Right lobe of liver (tissue), 6 donors: ENCODE measurements at regions of chr3 and their contacts with region 1.

Region 1: DNA sequence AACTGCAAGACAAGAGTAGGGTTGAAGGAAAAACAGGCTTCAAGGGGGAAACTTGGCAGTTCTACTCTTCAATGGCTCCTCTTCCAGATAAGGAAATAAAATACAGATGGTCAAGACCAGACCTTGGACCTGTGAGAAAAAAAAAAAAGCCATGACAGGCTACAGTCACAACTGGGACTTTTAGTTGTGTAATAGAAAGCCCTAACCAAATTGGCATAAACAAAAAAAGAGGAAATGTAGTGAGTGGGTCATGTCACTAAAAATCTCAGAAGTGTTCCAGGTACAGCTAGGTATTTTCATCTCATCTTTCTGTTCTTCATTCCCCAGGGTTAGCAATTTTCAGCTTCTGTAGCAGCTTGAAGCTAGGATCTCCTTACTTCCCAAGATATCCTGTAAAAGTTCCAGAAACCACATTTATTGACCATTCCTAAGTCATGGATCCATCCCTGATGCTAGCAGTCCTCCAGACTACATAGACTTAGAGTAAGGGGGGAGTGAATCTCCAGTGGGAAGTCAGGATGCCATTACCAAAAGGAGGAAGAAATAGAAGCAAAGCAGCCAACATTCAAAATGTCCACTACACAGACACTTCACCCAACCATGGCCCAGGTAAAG is 61.0 kb upstream of the CSTA start:
- DNase-seq: no peak
- ATAC-seq: no peak
- H3K4me3 ChIP-seq: no peak overlapping the region
- H3K27ac ChIP-seq: no peak overlapping the region
- H3K4me1 ChIP-seq: no peaks in the 10 kb centered on the region
- H3K27me3 ChIP-seq: no peaks in the 10 kb centered on the region
- CTCF ChIP-seq: no peak
- POLR2A ChIP-seq: no peak

Region 2: GRCh38 chr3:122094705-122095104 is 169.4 kb before region 1 on chr3:
- intact Hi-C with region 1: loop called in 1 of 2 experiments (anchors 5 kb)
- DNase-seq: no peak
- ATAC-seq: no peak
- H3K4me3 ChIP-seq: no peak overlapping the region
- H3K27ac ChIP-seq: no peak overlapping the region
- H3K4me1 ChIP-seq: no peaks in the 10 kb centered on the region
- H3K27me3 ChIP-seq: no peaks in the 10 kb centered on the region
- CTCF ChIP-seq: no peak
- POLR2A ChIP-seq: no peak

Region 3: GRCh38 chr3:122342803-122343202 is 78.7 kb after region 1 on chr3:
- intact Hi-C with region 1: no loop called
- DNase-seq: no peak
- ATAC-seq: no peak
- H3K4me3 ChIP-seq: no peak overlapping the region
- H3K27ac ChIP-seq: no peak overlapping the region
- H3K4me1 ChIP-seq: no peaks in the 10 kb centered on the region
- H3K27me3 ChIP-seq: no peaks in the 10 kb centered on the region
- CTCF ChIP-seq: no peak
- POLR2A ChIP-seq: no peak